ENCODE measurements at regions of chr11 and their contacts with region 1.

Region 1: DNA sequence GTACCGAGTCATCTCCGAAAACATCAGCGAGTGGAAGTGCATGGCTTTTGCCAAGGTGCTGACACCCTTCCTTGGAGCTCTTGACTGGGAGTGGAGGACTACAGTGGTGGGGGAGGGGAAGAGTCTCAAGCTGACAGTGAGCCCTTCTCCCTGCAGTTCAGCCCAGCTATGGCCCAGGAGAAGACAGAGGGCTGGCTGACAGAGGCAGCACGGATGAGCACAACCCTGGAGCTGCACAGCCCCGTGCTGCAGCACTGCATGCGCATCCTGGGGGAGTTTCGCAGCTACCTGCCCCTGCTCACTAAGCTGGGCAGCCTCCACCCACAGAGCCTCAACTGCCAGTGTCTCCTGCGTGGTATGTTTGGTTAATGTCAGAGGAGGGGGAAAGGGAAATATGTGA is 41.4 kb downstream of the DNHD1 start:
- DNase-seq: no peak

Region 2: GRCh38 chr11:6572215-6572614 is 33.8 kb after region 1 on chr11:
- intact Hi-C with region 1: loop called in 1 of 2 experiments (anchors 5 kb)
- DNase-seq: no peak